Prostate gland (tissue), 2 donors: ENCODE measurements at regions of chr4 and their contacts with region 1.

Region 1: GRCh38 chr4:11428899-11429698 is 405 bp upstream of the HS3ST1 start:
- DNase-seq: peak; percentile 83
- H3K4me3 ChIP-seq: peak overlapping the region; percentile 46 to 48
- H3K27ac ChIP-seq: peak overlapping the region; percentile 8 to 56
- H3K4me1 ChIP-seq: no peaks in the 10 kb centered on the region
- H3K27me3 ChIP-seq: no peaks in the 10 kb centered on the region
- CTCF ChIP-seq: peak; percentile 23 to 83 (median 70)
- POLR2A ChIP-seq: peak; percentile 51

Region 2: DNA sequence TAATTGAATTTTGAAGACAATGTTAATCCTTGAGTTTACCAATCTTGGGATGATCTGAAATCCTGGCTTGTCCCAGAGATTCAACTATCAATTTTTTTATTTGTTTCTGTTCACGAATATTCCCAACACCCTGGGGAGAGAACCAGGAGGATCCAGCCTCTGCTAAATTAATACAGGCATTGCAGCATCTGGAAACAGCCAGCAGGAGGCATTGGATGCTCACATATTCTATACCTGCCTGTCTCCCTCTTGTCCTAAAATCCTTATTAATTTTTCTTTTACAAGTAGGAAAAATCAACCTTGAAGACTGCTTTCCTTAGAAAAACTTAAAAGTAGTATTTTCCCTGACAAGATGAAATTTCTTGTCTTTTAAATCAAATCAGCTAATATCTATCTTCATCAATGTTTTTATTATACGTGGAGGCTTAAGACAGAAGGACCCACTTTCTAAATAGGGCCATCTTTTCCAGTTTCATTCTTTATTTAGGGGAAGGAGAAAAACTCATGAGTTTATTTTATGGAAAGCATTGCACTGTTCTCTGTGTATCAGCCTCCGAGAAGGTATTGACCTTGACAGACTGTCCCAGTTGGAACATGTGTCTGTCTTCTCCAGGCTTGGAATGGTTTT is 846.9 kb before region 1 on chr4:
- intact Hi-C with region 1: loop called (anchors 10 kb)
- DNase-seq: peak; percentile 48
- H3K4me3 ChIP-seq: no peak overlapping the region
- H3K27ac ChIP-seq: no peak overlapping the region
- H3K4me1 ChIP-seq: no peaks in the 10 kb centered on the region
- H3K27me3 ChIP-seq: no peaks in the 10 kb centered on the region
- CTCF ChIP-seq: peak; percentile 55 to 90 (median 80)
- POLR2A ChIP-seq: no peak